T-cell (primary cell): ENCODE measurements at regions of chr2 and their contacts with region 1.

Region 1: DNA sequence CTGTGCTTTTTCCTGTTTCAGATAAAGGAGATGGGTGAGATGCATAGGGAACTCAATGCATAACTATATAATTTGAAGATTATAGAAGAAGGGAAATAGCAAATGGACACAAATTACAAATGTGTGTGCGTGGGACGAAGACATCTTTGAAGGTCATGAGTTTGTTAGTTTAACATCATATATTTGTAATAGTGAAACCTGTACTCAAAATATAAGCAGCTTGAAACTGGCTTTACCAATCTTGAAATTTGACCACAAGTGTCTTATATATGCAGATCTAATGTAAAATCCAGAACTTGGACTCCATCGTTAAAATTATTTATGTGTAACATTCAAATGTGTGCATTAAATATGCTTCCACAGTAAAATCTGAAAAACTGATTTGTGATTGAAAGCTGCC is 16.4 kb upstream of the MSH2 start:
- DNase-seq: no peak
- ATAC-seq: no peak
- H3K4me3 ChIP-seq: no peak overlapping the region
- H3K4me3 Mint-ChIP-seq: no peak overlapping the region
- H3K27ac ChIP-seq: no peak overlapping the region
- H3K27ac Mint-ChIP-seq: no peak overlapping the region
- H3K4me1 ChIP-seq: no peaks in the 10 kb centered on the region
- H3K4me1 Mint-ChIP-seq: no peaks in the 10 kb centered on the region
- H3K27me3 ChIP-seq: peaks cover 0 to 1% of the 10 kb centered on the region in 2 experiments
- H3K27me3 Mint-ChIP-seq: peaks cover 8% of the 10 kb centered on the region in 2 donors

Region 2: GRCh38 chr2:47336259-47337238 is 50.0 kb before region 1 on chr2:
- CTCF ChIA-PET with region 1: interaction called, 5 to 19 read pairs
- POLR2A ChIA-PET with region 1: interaction called in 1 of 2 experiments, 3 read pairs
- DNase-seq: no peak
- ATAC-seq: no peak
- H3K4me3 ChIP-seq: no peak overlapping the region
- H3K4me3 Mint-ChIP-seq: no peak overlapping the region
- H3K27ac ChIP-seq: no peak overlapping the region
- H3K27ac Mint-ChIP-seq: no peak overlapping the region
- H3K4me1 ChIP-seq: no peaks in the 10 kb centered on the region
- H3K4me1 Mint-ChIP-seq: peaks cover 0 to 4% (median 0%) of the 10 kb centered on the region in 3 donors
- H3K27me3 ChIP-seq: peaks cover 0 to 4% of the 10 kb centered on the region in 2 experiments
- H3K27me3 Mint-ChIP-seq: peaks cover 6 to 14% of the 10 kb centered on the region in 2 donors

Region 3: DNA sequence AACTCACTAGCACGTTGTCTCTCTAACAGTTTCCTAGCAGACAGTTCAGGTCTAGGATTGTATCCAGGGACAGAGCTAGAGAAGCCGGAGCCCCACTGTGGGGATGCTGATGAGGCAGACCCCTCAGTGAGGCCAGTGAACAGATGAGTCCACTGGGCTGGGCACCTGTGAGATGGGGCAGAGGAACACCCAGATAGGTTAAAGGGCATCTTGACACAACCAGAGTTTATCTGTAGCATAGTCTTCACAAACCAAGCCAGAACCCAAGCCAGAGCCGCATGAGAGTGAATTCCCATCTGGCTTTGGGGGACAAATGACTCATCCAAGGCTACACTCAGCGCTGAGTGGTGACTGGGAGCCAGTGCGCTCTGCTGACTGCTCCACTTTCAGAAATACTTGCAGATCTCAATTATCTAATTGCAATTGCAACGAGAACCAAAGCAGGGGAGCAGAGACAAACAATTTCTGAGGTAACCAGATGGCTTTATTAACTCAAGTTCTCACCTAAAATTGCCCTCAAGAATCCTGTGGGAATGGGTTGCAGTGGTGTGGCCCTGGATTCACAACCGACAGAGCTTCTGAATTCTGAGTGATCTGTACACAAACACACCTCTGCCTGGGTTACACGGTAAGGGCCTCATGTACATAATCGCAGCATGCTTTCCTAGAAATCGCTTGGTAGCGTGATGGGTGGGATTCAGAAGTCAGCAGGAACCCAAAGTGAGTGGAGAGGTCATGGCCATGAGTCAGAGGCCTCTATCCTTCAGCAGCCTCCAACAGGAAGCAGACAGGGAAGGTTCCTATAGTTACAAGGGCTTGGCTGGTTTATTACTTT is 32.3 kb before region 1 on chr2:
- CTCF ChIA-PET with region 1: no interaction called
- POLR2A ChIA-PET with region 1: no interaction called
- DNase-seq: no peak
- ATAC-seq: no peak
- H3K4me3 ChIP-seq: no peak overlapping the region
- H3K4me3 Mint-ChIP-seq: no peak overlapping the region
- H3K27ac ChIP-seq: no peak overlapping the region
- H3K27ac Mint-ChIP-seq: no peak overlapping the region
- H3K4me1 ChIP-seq: no peaks in the 10 kb centered on the region
- H3K4me1 Mint-ChIP-seq: no peaks in the 10 kb centered on the region
- H3K27me3 ChIP-seq: peaks cover 0 to 3% of the 10 kb centered on the region in 2 experiments
- H3K27me3 Mint-ChIP-seq: peaks cover 0 to under 1% of the 10 kb centered on the region in 2 donors

Region 4: GRCh38 chr2:47373747-47374146 is 12.8 kb before region 1 on chr2:
- CTCF ChIA-PET with region 1: no interaction called
- POLR2A ChIA-PET with region 1: interaction called, 5 to 12 read pairs
- DNase-seq: no peak
- ATAC-seq: no peak
- H3K4me3 ChIP-seq: no peak overlapping the region
- H3K4me3 Mint-ChIP-seq: no peak overlapping the region
- H3K27ac ChIP-seq: no peak overlapping the region
- H3K27ac Mint-ChIP-seq: no peak overlapping the region
- H3K4me1 ChIP-seq: peaks cover 0 to 9% of the 10 kb centered on the region in 2 experiments
- H3K4me1 Mint-ChIP-seq: peaks cover 0 to 3% (median 0%) of the 10 kb centered on the region in 3 donors
- H3K27me3 ChIP-seq: peaks cover 0 to 22% of the 10 kb centered on the region in 2 experiments
- H3K27me3 Mint-ChIP-seq: peaks cover 13 to 21% of the 10 kb centered on the region in 2 donors

Region 5: GRCh38 chr2:47664817-47665216 is 278.3 kb after region 1 on chr2:
- CTCF ChIA-PET with region 1: no interaction called
- POLR2A ChIA-PET with region 1: no interaction called
- DNase-seq: no peak
- ATAC-seq: no peak
- H3K4me3 ChIP-seq: no peak overlapping the region
- H3K4me3 Mint-ChIP-seq: no peak overlapping the region
- H3K27ac ChIP-seq: no peak overlapping the region
- H3K27ac Mint-ChIP-seq: no peak overlapping the region
- H3K4me1 ChIP-seq: no peaks in the 10 kb centered on the region
- H3K4me1 Mint-ChIP-seq: no peaks in the 10 kb centered on the region
- H3K27me3 ChIP-seq: no peaks in the 10 kb centered on the region
- H3K27me3 Mint-ChIP-seq: no peaks in the 10 kb centered on the region

Region 6: DNA sequence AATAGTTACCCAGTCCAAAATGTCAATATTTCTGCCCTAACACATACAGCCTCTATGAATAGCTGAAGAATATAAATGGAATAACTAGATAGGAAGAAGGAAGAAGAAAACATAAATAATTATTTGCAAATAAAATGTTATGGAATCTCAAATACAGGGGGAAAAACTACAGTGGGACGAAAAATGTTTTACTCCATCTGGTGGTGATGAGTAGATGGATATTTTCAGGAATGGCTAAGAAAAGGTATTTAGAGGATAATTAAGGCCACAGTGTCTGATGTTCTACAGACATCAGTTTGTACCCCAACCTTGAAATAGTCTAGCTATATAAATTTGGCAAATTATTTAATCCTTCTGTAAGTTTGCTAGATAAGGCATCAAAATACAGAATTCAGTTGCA is 1945.9 kb after region 1 on chr2:
- CTCF ChIA-PET with region 1: no interaction called
- POLR2A ChIA-PET with region 1: no interaction called
- DNase-seq: no peak
- ATAC-seq: no peak
- H3K4me3 ChIP-seq: no peak overlapping the region
- H3K4me3 Mint-ChIP-seq: no peak overlapping the region
- H3K27ac ChIP-seq: no peak overlapping the region
- H3K27ac Mint-ChIP-seq: no peak overlapping the region
- H3K4me1 ChIP-seq: no peaks in the 10 kb centered on the region
- H3K4me1 Mint-ChIP-seq: no peaks in the 10 kb centered on the region
- H3K27me3 ChIP-seq: no peaks in the 10 kb centered on the region
- H3K27me3 Mint-ChIP-seq: no peaks in the 10 kb centered on the region